ENCODE measurements at regions of chr9 and their contacts with region 1.

Region 1: GRCh38 chr9:87812375-87813118 is 70.1 kb upstream of the SPATA31E1 start:
- H3K4me3 ChIP-seq: no peak overlapping the region
- H3K27ac ChIP-seq: no peak overlapping the region
- H3K4me1 ChIP-seq: no peaks in the 10 kb centered on the region
- CTCF ChIP-seq: peak; percentile 30; the same call in 1 of the 2 replicates

Region 2: GRCh38 chr9:87678650-87679515 is 133.7 kb before region 1 on chr9:
- CTCF ChIA-PET with region 1: interaction called, 12 read pairs
- POLR2A ChIA-PET with region 1: no interaction called
- H3K4me3 ChIP-seq: no peak overlapping the region
- H3K27ac ChIP-seq: no peak overlapping the region
- H3K4me1 ChIP-seq: no peaks in the 10 kb centered on the region
- CTCF ChIP-seq: 0 out of 2 replicates have a peak, but pooled peaks have one; percentile 27

Region 3: DNA sequence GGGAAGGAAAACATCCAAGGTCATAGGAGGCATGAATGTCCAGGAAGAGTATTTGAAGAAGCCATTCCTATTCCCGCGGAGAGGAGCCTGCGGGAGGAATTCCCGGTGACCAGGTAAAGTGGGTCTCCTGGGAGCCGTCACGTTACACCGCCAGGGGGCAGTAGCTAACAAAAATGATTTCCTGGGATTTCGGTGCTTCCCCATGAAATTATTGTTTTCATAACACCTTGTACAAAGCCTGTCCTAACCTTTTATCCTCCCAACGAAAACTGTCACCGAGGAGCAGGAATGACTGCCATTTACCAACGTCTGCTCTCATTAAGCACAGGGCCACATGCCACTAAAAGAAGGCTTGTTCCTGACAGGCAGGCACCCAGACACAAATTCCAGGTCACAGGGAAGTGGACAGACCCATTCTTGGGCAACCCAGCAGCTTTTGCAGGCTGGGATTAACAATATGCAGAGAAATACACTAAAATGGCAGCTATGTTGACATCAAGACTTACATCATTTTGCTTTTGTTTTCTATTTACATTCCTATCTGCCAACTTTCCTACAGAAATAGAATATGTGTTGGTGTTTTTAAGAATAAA is 127.8 kb before region 1 on chr9:
- CTCF ChIA-PET with region 1: interaction called, 12 read pairs
- POLR2A ChIA-PET with region 1: no interaction called
- H3K4me3 ChIP-seq: no peak overlapping the region
- H3K27ac ChIP-seq: no peak overlapping the region
- H3K4me1 ChIP-seq: no peaks in the 10 kb centered on the region
- CTCF ChIP-seq: 0 out of 2 replicates have a peak, but pooled peaks have one; percentile 24